MCF 10A (cell line): ENCODE measurements at regions of chr3 and their contacts with region 1.

Region 1: DNA sequence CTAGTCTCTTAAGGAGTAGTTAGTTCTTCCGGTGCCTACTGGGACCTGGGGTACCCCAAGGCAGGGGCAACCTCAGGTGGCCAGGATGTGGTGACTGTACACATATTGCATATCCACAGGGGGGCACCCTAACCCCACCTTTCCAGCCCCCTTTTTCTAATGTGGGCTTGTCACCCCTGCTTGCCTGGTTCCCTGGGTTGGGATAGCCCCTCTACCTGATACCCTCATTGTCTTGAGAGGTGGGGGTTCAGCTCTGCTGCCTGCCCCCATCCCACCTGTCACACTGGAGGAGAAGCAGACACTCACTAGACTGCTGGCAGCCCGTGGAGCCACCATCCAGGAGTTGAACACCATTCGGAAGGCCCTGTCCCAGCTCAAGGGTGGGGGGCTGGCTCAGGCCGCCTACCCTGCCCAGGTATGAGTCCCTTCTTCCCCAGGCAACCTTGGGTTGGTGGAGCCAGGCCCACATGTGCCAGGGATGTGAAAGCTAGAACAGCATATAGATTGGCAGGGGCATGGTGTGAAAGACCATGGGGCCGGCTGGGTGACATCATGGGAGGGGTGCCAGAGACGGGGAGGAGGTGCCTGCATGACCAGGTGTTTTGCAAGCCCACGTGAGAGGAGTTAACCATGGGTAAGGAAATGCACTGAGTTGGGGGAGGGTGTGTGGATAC is 4.0 kb downstream of the GLYCTK start:
- DNase-seq: no peak
- H3K4me3 Mint-ChIP-seq: no peak overlapping the region
- H3K27ac Mint-ChIP-seq: no peak overlapping the region
- H3K4me1 Mint-ChIP-seq: peaks cover 4% of the 10 kb centered on the region
- H3K27me3 Mint-ChIP-seq: no peaks in the 10 kb centered on the region
- CTCF ChIP-seq: peak; percentile 34

Region 2: DNA sequence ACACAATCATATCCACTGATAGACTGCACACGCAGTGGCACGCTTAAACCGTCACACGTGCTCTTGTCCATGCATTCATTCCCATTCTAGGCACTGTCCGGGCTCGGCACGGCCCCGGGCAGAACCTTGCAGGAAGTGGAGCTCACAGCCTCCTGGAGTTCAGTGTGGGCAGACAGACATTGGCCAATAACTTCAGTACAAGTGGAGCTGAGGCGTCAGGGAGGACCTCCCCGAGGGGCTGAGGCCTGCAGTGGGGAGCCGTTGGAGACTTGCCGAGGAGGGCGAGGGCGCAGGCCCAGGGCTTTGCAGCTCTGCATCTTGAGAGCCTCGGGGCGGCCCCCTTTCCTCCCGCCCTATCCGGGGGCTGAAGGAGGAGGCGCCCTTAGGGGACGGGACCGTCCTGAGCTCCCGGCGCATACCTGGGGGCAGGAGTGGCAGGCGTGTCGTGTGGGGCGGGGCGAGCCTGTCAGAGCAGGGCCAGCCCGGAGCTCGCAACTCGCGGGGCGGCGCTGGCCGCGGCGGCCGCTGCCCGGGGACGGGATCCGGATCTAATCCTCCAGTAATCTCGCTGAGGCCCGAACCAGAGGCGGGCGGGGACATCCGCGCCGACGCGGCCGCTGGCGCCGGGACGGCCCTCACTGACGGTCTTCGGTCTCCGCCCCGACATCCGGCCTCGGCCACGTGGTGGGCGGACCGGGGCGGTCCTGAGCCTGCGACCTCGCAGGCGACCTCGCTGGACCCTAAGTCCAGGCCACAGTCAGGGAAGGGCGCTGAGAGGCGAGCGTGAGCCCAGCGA is 308.7 kb before region 1 on chr3 and contains the start of gene ACY1:
- CTCF ChIA-PET with region 1: no interaction called
- POLR2A ChIA-PET with region 1: interaction called, 11 read pairs
- intact Hi-C with region 1: no loop called
- DNase-seq: peak; percentile 87
- H3K4me3 Mint-ChIP-seq: peak within 1 kb of the TSS; percentile 87
- H3K27ac Mint-ChIP-seq: peak within 1 kb of the TSS; percentile 98
- H3K4me1 Mint-ChIP-seq: peaks cover 25% of the 10 kb centered on the region
- H3K27me3 Mint-ChIP-seq: no peaks in the 10 kb centered on the region
- CTCF ChIP-seq: no peak
- total RNA-seq, gene ACY1: 109 and 164 TPM in 2 replicates

Region 3: GRCh38 chr3:52238761-52239701 is 52.6 kb before region 1 on chr3 and contains the start of gene TWF2:
- CTCF ChIA-PET with region 1: interaction called, 3 read pairs
- POLR2A ChIA-PET with region 1: interaction called, 23 read pairs
- intact Hi-C with region 1: no loop called
- DNase-seq: peak; percentile 70
- H3K4me3 Mint-ChIP-seq: peak within 1 kb of the TSS; percentile 86
- H3K27ac Mint-ChIP-seq: peak within 1 kb of the TSS; percentile 87
- H3K4me1 Mint-ChIP-seq: peaks cover 31% of the 10 kb centered on the region
- H3K27me3 Mint-ChIP-seq: no peaks in the 10 kb centered on the region
- CTCF ChIP-seq: no peak
- total RNA-seq, gene TWF2: 30.5 and 47.0 TPM in 2 replicates

Region 4: GRCh38 chr3:52262447-52262846 is 29.2 kb before region 1 on chr3:
- CTCF ChIA-PET with region 1: interaction called, 3 read pairs
- POLR2A ChIA-PET with region 1: interaction called, 10 read pairs
- intact Hi-C with region 1: no loop called
- DNase-seq: no peak
- H3K4me3 Mint-ChIP-seq: no peak overlapping the region
- H3K27ac Mint-ChIP-seq: no peak overlapping the region
- H3K4me1 Mint-ChIP-seq: peaks cover 16% of the 10 kb centered on the region
- H3K27me3 Mint-ChIP-seq: no peaks in the 10 kb centered on the region
- CTCF ChIP-seq: no peak

Region 5: DNA sequence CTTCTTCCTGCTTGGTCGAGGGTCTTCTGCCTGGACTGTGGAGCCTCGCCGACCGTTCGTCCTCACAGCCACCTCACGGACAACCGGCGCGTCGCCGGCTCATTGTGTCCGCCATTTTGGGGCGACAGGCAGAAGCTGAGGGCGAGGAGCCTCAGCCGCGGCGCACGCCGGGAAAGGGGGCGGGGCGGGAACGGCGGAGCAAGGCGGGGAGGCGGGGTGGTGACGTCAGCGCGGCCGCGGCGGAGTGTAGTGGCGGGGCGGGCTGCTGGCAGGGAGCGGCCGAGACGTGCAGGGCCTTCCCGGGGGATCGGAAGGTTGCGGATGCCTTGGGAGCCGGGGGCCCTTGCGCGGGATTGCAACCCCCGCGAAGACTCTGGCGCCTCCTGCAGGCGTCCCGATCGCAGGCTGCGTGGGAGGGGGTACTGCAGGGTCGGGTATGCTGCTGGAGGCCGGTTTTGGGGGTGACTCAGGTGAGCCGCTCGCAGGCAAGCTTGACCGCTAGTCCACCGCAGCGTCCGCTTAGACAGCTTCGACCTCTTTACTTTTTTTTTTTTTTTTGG is 13.1 kb before region 1 on chr3 and contains the start of gene WDR82:
- CTCF ChIA-PET with region 1: interaction called, 3 read pairs
- POLR2A ChIA-PET with region 1: interaction called, 94 read pairs
- intact Hi-C with region 1: loop called (anchors 1 kb)
- DNase-seq: peak; percentile 90
- H3K4me3 Mint-ChIP-seq: peak within 1 kb of the TSS; percentile 84
- H3K27ac Mint-ChIP-seq: peak within 1 kb of the TSS; percentile 99
- H3K4me1 Mint-ChIP-seq: peaks cover 26% of the 10 kb centered on the region
- H3K27me3 Mint-ChIP-seq: no peaks in the 10 kb centered on the region
- CTCF ChIP-seq: peak; percentile 38
- total RNA-seq, gene WDR82: 60.7 and 62.5 TPM in 2 replicates

Region 6: DNA sequence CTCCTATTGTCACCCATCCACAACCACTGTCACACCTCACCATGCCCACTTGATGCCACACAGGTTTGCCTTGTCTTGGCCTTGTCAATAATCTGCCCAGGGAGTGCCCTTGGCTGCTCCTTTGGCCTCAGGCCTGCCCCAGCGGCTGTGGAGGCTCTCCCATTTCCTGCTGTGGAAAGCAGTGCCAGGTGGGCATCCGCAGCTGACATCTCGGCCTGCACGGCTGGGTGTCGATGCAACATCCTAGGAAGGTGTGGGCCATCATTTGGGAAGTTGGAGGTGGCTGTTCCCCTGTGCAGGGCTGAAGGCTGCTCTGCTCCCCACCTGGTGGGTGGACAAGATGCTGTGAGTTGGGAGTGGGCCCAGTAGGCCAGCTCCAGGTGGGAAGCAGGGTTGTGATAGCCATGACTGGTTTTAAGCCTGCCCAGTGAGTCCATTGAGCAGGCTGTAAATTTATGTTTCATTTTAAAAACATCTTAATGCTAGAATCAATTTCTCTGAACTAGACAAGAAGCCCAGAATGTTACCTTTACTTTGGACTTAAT is 37.0 kb after region 1 on chr3:
- CTCF ChIA-PET with region 1: interaction called, 10 read pairs
- POLR2A ChIA-PET with region 1: interaction called, 7 read pairs
- intact Hi-C with region 1: no loop called
- DNase-seq: no peak
- H3K4me3 Mint-ChIP-seq: no peak overlapping the region
- H3K27ac Mint-ChIP-seq: no peak overlapping the region
- H3K4me1 Mint-ChIP-seq: no peaks in the 10 kb centered on the region
- H3K27me3 Mint-ChIP-seq: no peaks in the 10 kb centered on the region
- CTCF ChIP-seq: no peak